ENCODE measurements at regions of chr17 and their contacts with region 1.

Region 1: DNA sequence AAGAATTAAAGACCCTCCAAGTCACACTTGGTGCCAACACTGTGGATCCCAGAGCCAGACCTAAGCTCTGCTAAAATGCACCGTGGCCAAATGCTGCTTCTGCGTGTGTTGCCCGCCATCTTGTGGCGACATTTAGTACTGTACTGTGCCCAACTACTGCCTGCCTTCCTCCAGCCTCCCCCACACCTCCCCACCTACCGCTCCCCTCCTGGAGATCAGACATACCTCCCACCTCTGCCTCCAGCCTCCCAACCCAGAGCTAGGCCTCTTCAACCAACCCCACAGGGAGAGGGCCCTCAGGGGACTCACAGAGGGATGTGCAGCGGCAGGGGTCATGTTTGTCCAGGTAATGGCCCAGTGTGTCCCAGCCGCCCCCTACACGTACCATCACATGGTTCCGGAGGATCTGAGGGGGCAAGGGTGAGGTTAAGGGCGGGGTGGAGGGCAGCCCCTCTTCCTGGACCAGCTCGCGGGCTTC is 5.5 kb downstream of the GAS2L2 start:
- DNase-seq: peak; percentile 61 to 83 (median 75)
- ATAC-seq: peak; percentile 93
- H3K4me3 ChIP-seq: no peak overlapping the region
- H3K4me3 Mint-ChIP-seq: no peak overlapping the region
- H3K27ac ChIP-seq: no peak overlapping the region
- H3K27ac Mint-ChIP-seq: no peak overlapping the region
- H3K4me1 ChIP-seq: no peaks in the 10 kb centered on the region
- H3K4me1 Mint-ChIP-seq: peaks cover 0 to 21% (median 3%) of the 10 kb centered on the region in 7 donors
- H3K27me3 ChIP-seq: peaks cover 0 to 10% of the 10 kb centered on the region in 2 donors
- H3K27me3 Mint-ChIP-seq: peaks cover 35 to 50% (median 42%) of the 10 kb centered on the region in 5 donors

Region 2: DNA sequence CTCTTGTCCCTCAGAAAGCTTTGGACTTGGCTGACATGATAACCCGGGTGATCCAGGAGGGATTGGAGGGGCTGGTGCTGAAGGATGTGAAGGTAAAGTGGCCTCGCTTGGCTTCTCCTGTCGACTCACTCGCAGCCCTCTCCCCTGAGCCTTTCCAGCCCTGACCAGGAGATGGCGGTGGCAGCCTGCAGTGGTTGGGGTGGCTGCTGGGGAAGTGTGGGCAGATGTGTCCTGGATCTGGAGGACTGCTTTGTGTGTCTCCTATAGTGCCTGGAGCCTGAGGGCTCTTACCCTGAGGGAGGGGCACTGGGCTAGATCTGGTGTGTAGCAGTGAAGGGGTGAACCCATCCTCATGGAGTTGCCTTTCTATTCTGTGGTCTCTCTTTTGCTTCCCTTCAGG is 749.4 kb before region 1 on chr17:
- CTCF ChIA-PET with region 1: no interaction called
- POLR2A ChIA-PET with region 1: no interaction called
- intact Hi-C with region 1: loop called in 1 of 2 experiments (anchors 1 kb)
- DNase-seq: peak; percentile 62 to 82 (median 76)
- ATAC-seq: peak; percentile 96
- H3K4me3 ChIP-seq: no peak overlapping the region
- H3K4me3 Mint-ChIP-seq: no peak overlapping the region
- H3K27ac ChIP-seq: no peak overlapping the region
- H3K27ac Mint-ChIP-seq: peak overlapping the region; percentile 60 to 89 (median 82)
- H3K4me1 ChIP-seq: no peaks in the 10 kb centered on the region
- H3K4me1 Mint-ChIP-seq: peaks cover 5 to 10% (median 6%) of the 10 kb centered on the region in 7 donors
- H3K27me3 ChIP-seq: no peaks in the 10 kb centered on the region
- H3K27me3 Mint-ChIP-seq: no peaks in the 10 kb centered on the region

Region 3: GRCh38 chr17:35170968-35171771 is 576.4 kb before region 1 on chr17:
- CTCF ChIA-PET with region 1: interaction called, 3 read pairs
- POLR2A ChIA-PET with region 1: no interaction called
- intact Hi-C with region 1: loop called in 1 of 2 experiments (anchors 1 kb)
- DNase-seq: peak in 7 of 9 donors; percentile 35 to 77 (median 70)
- ATAC-seq: peak; percentile 86
- H3K4me3 ChIP-seq: peak overlapping the region; percentile 25
- H3K4me3 Mint-ChIP-seq: peak overlapping the region in 8 of 10 donors; percentile 46 to 79 (median 70)
- H3K27ac ChIP-seq: peak overlapping the region; percentile 47
- H3K27ac Mint-ChIP-seq: peak overlapping the region; percentile 65 to 96 (median 89)
- H3K4me1 ChIP-seq: peaks cover 16 to 20% of the 10 kb centered on the region in 2 donors
- H3K4me1 Mint-ChIP-seq: peaks cover 24 to 59% (median 44%) of the 10 kb centered on the region in 7 donors
- H3K27me3 ChIP-seq: no peaks in the 10 kb centered on the region
- H3K27me3 Mint-ChIP-seq: no peaks in the 10 kb centered on the region

Region 4: GRCh38 chr17:35612924-35613521 is 134.6 kb before region 1 on chr17:
- CTCF ChIA-PET with region 1: interaction called, 93 read pairs
- POLR2A ChIA-PET with region 1: no interaction called
- intact Hi-C with region 1: loop called (anchors 1 kb)
- DNase-seq: peak in 6 of 9 donors; percentile 21 to 50 (median 31)
- ATAC-seq: peak; percentile 67
- H3K4me3 ChIP-seq: no peak overlapping the region
- H3K4me3 Mint-ChIP-seq: no peak overlapping the region
- H3K27ac ChIP-seq: no peak overlapping the region
- H3K27ac Mint-ChIP-seq: no peak overlapping the region
- H3K4me1 ChIP-seq: no peaks in the 10 kb centered on the region
- H3K4me1 Mint-ChIP-seq: peaks cover 0 to 9% (median 5%) of the 10 kb centered on the region in 7 donors
- H3K27me3 ChIP-seq: no peaks in the 10 kb centered on the region
- H3K27me3 Mint-ChIP-seq: no peaks in the 10 kb centered on the region

Measured in naive thymus-derived CD4-positive, alpha-beta T cell (primary cell).